OCI-LY7 (cell line): ENCODE measurements at regions of chr10 and their contacts with region 1.

Region 1: DNA sequence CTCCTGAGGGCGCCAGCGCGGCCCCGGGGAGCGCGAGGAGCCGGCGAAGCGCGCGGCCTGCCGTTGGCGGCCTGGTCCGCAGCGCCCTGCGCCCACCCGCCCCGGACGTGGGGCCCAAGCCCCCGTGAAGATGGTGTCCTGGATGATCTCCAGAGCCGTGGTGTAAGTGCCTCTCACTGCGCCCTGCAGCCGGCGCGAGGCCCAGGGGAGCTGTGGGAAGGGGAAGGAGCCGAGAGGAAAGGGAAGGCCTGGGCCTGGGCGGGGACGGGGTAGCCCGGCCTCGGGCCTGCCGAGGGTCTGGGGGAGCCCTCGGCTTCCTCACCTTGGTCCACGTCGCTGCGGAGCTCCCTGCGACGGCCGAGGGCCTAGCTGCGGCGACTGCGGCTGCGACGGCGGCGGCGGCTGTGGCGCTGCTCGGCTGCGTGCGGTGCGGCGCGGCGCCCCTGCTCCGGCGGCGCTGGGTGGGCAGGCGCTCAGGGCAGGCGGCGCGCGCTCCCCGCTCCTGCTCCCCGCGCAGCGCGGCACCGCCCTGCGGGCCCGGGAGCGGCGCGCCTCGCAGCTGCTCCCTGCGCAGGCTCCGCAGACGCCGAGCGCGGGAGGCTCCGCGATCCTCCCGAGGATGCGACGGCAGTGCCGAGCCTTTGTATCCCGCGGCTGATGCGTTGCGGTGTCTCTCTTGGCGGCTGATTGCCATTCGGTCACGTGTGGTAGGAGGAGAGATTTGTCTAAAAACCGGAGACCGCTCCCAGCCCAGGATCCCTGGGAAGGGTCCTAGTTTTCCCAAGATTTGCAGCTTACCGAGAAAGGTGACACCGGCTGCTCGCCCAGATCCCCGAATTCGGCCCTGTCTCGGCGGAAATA is 445 bp downstream of the REEP3 start:
- DNase-seq: peak; percentile 79
- H3K4me3 ChIP-seq: peak overlapping the region; percentile 76
- H3K27ac ChIP-seq: peak overlapping the region; percentile 73
- H3K4me1 ChIP-seq: peaks cover 29% of the 10 kb centered on the region
- CTCF ChIP-seq: no peak

Region 2: DNA sequence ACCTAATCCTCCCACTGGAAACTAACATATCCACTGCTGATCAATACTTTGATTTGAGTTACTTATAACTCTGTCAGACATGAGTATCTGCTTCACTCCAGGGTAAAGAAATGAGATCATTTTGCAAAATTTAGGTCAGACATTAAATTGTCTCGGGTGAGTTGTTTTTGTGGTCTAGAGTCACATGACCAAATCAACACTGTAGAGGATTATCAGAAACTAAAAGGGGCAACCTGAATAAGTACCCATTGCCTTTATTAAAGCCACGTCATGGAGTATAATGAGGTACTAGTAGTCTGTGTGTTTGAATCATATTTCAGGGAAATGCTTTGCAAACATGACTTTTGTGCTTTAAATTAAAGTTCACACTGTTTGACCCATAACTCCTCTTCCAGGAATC is 824.8 kb before region 1 on chr10:
- CTCF ChIA-PET with region 1: no interaction called
- POLR2A ChIA-PET with region 1: no interaction called
- intact Hi-C with region 1: no loop called
- DNase-seq: no peak
- H3K4me3 ChIP-seq: no peak overlapping the region
- H3K27ac ChIP-seq: no peak overlapping the region
- H3K4me1 ChIP-seq: peaks cover under 1% of the 10 kb centered on the region
- CTCF ChIP-seq: no peak

Region 3: GRCh38 chr10:63217120-63217605 is 304.5 kb before region 1 on chr10:
- CTCF ChIA-PET with region 1: no interaction called
- POLR2A ChIA-PET with region 1: interaction called, 3 read pairs
- intact Hi-C with region 1: loop called (anchors 5 kb)
- DNase-seq: peak; percentile 73
- H3K4me3 ChIP-seq: no peak overlapping the region
- H3K27ac ChIP-seq: no peak overlapping the region
- H3K4me1 ChIP-seq: peaks cover 44% of the 10 kb centered on the region
- CTCF ChIP-seq: peak; percentile 93

Region 4: DNA sequence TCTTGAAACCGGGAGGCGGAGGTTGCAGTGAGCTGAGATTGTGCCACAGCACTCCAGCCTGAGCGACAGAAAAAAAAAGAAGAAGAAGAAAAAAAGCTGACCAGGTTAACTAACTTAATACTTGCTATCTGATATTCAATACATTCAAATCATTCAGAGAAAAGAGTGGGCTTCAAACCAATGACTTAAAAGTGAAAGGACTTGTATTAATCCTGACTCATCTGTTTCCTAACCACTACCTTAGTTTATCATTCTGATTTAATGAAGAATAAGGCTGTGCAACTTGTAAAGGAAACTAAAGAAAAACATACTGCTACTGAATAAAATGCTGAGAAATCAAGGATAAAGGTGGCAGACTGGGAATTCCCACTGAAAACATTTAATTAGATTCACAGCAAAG is 260.1 kb before region 1 on chr10:
- CTCF ChIA-PET with region 1: no interaction called
- POLR2A ChIA-PET with region 1: interaction called, 6 read pairs
- intact Hi-C with region 1: loop called (anchors 2 kb)
- DNase-seq: no peak
- H3K4me3 ChIP-seq: peak overlapping the region; percentile 82
- H3K27ac ChIP-seq: peak overlapping the region; percentile 94
- H3K4me1 ChIP-seq: peaks cover 75% of the 10 kb centered on the region
- CTCF ChIP-seq: no peak

Region 5: GRCh38 chr10:63465293-63466143 is 56.1 kb before region 1 on chr10 and contains the start of gene JMJD1C:
- CTCF ChIA-PET with region 1: no interaction called
- POLR2A ChIA-PET with region 1: no interaction called
- intact Hi-C with region 1: loop called (anchors 2 kb)
- DNase-seq: peak; percentile 61
- H3K4me3 ChIP-seq: peak within 1 kb of the TSS; percentile 73
- H3K27ac ChIP-seq: no peak within 1 kb of the TSS
- H3K4me1 ChIP-seq: peaks cover 7% of the 10 kb centered on the region
- CTCF ChIP-seq: peak; percentile 34; the same call in 1 of the 2 replicates
- total RNA-seq, gene JMJD1C: 99.2 and 104 TPM in 2 replicates

Region 6: GRCh38 chr10:63603709-63604445 is 82.2 kb after region 1 on chr10:
- CTCF ChIA-PET with region 1: no interaction called
- POLR2A ChIA-PET with region 1: interaction called, 10 read pairs
- intact Hi-C with region 1: no loop called
- DNase-seq: no peak
- H3K4me3 ChIP-seq: no peak overlapping the region
- H3K27ac ChIP-seq: no peak overlapping the region
- H3K4me1 ChIP-seq: no peaks in the 10 kb centered on the region
- CTCF ChIP-seq: no peak